ENCODE measurements at regions of chr13 and their contacts with region 1.

Region 1: DNA sequence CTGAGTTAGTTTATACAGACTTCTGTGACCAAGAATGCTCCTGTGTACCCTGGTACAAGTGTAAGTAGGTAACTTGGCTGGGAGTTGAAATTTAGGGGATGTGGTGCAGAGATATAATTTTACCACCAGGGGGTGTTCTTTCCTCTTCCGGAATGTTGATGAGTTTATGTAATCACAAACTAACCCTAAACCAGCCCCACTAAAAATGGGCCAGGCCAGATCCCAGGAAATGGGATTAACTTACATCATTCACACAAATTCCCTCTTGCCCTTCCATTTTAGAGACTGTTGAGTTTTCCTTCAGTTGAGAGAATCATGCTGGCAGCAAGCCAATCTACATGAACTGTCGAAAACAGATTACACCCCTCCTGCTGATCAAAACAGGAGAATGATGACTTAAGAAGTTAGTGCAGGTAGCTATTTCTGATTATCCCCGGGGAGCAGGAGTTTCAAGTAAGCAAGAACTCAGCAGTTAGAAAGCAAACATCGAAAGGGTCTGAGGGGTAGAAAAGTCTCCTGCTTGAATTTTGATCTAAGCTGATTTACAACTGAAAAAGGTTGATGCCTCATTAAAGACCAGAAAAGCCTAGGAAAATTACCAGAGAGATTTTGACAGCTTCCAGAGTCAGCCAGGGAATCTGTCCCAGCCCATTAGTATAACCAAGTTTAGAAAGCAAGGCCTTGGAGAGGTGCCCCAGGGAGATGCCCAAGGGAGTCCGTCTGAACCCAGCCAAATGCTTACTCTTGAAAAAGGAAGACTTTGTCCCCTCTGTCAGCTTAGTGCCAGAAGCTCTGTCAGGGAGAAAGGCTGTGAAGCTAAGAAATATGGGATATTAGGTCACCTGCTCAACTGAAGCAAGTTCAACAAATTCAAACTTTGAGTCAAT is 32.3 kb upstream of the MED4 start:
- DNase-seq: peak; percentile 23
- H3K4me3 ChIP-seq: no peak overlapping the region
- H3K27ac ChIP-seq: peak overlapping the region; percentile 24 to 59
- H3K4me1 ChIP-seq: peaks cover 14% of the 10 kb centered on the region
- H3K27me3 ChIP-seq: no peaks in the 10 kb centered on the region
- CTCF ChIP-seq: peak; percentile 50 to 83 (median 80)
- POLR2A ChIP-seq: no peak

Region 2: DNA sequence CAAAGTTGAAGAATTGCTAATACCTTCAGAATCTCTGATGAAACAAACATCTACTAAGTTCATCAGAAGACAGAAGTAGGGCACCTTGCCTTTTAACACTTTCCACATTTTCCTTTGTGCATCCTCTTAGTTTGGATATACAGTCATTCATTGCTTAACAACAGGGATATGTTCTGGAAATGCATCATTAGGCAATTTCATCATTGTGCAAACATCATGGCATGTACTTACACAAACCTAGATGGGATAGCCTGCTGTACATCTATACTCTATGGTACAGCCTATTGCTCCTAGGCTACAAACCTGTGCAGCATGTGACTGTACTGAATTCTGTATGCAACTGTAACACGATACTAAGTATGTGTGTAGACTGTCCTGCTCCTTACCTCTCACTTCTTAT is 295.9 kb before region 1 on chr13:
- intact Hi-C with region 1: no loop called
- DNase-seq: no peak
- H3K4me3 ChIP-seq: no peak overlapping the region
- H3K27ac ChIP-seq: no peak overlapping the region
- H3K4me1 ChIP-seq: no peaks in the 10 kb centered on the region
- H3K27me3 ChIP-seq: no peaks in the 10 kb centered on the region
- CTCF ChIP-seq: no peak
- POLR2A ChIP-seq: no peak

Region 3: DNA sequence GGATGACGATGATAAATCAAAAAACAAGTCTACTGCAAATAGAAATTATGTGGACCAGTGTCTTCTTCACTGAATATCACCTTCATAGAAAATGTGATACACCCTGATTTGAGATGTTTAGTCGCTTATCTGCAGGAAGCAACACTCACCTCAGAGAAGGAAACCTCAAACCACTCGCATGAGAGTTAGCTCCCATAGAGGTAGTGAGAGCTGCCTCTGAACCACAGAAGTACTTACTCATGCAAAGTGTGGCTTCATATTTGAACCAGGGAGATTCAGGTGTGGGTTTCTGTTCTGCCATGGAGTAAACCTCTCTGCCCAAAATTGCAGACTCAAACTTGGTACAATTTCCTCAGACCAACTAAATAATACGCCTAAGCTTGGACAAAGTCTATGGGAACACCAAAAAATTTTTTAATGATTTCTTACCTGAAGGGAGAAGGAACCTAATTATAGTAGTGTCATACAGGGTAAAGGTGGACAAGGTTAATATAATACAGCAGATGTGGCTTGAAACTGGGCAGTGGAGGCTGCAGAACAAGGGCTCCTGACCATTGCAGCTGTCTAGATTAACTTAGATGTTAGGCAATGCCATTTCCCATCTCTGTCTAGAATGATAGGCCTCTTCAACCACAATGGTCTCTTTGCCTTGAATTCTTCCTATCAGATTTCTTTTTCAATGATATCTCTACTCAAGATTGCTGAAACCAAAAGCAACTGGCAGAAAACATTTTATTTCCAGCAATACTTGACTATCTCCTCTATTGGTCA is 435.3 kb after region 1 on chr13:
- intact Hi-C with region 1: loop called (anchors 10 kb)
- DNase-seq: no peak
- H3K4me3 ChIP-seq: no peak overlapping the region
- H3K27ac ChIP-seq: no peak overlapping the region
- H3K4me1 ChIP-seq: no peaks in the 10 kb centered on the region
- H3K27me3 ChIP-seq: no peaks in the 10 kb centered on the region
- CTCF ChIP-seq: no peak
- POLR2A ChIP-seq: no peak